GM12878 (cell line): ENCODE measurements at regions of chr6 and their contacts with region 1.

Region 1: DNA sequence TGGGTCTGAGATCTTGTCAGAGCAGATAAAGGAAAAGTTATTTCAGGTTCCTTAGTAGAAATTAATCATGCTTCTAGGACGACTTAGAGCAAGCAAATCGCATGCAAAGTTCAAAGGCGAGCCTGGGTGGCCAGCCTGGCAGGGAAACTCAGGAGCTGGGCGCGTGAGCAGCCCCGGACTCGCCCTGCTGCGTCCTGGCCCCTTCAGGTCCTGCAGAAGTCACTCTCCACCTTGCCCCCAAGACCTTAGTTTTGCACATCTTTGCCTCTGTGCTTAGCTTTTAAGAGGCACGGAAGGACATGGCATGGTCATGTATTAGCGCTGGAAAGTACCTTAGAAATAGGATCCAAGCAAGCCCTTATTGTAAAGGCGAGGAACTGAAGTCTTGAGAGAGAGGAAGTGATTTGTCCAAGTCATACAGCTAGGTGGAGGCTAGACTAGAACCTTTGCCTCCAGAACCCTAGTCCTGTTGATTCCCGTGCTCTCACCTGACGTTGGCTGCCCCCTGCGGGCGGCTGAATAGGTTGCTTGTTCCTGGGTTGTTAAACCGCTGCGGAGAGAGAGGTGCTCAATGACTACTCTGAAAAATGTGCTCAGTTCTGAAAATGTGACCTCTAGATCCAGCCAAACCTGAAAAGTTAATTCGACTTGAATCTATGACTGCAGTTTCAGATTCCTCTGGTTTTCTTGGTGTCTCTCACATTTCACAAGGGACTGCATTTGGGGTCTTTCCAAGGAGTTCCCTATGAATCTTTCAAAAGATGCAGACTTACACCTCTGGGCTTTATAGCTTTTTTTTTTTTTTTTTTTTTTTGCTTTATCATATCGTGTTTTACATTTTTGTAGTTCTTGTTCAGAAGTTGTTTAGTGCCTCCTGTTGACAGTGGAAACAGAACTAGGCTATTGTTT is 2.7 kb downstream of the MYB start:
- DNase-seq: no peak
- ATAC-seq: peak; percentile 62
- H3K4me3 ChIP-seq: peak overlapping the region; percentile 89
- H3K27ac ChIP-seq: peak overlapping the region; percentile 99
- H3K4me1 ChIP-seq: peaks cover 16% of the 10 kb centered on the region
- H3K27me3 ChIP-seq: no peaks in the 10 kb centered on the region
- CTCF ChIP-seq: peak; percentile 71 to 91 (median 79); a peak in 5 of 6 replicates
- EP300 ChIP-seq: no peak; a peak in 1 of 4 replicates
- POLR2A ChIP-seq: peak; percentile 12
- RAD21 ChIP-seq: peak; percentile 90

Region 2: DNA sequence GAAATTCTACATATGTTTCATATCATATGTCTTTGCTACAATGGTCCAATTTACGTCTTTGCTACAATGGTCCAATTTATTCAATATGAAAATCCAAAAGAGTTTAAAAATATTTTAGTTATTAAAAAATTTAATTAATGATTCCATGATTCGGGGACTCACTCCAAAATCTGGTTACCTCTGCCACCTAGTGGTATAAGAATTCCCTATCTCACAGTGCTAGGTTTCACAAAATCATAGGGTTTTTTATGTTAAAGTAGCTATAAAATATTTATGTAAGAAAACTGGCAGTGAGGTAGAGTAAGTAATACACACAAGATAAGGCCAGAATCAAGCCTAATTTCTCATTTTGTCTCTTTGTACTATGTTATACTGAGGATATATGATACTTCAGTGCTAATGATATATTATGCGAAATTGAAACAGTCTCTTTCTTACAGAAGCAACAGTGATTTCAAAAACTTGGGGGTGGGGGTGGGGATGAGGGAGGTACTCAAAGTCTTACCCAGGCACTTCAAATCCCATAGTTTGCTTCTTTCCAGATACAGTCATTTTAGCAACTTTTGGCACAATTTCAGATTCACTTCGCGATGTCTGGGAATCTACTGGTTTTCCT is 181.4 kb before region 1 on chr6:
- CTCF ChIA-PET with region 1: interaction called, 12 read pairs
- POLR2A ChIA-PET with region 1: interaction called, 4 read pairs
- RAD21 ChIA-PET with region 1: interaction called, 14 read pairs
- SMC1A ChIA-PET with region 1: interaction called, 25 read pairs
- in situ Hi-C with region 1: no loop called
- intact Hi-C with region 1: loop called (anchors 2 kb)
- DNase-seq: no peak
- ATAC-seq: peak; percentile 64
- H3K4me3 ChIP-seq: no peak overlapping the region; the same call in 1 of the 2 replicates
- H3K27ac ChIP-seq: peak overlapping the region; percentile 88
- H3K4me1 ChIP-seq: peaks cover 11% of the 10 kb centered on the region
- H3K27me3 ChIP-seq: no peaks in the 10 kb centered on the region
- CTCF ChIP-seq: peak; percentile 42 to 45 (median 44); a peak in 4 of 6 replicates
- EP300 ChIP-seq: no peak
- POLR2A ChIP-seq: no peak
- RAD21 ChIP-seq: peak; percentile 65

Region 3: DNA sequence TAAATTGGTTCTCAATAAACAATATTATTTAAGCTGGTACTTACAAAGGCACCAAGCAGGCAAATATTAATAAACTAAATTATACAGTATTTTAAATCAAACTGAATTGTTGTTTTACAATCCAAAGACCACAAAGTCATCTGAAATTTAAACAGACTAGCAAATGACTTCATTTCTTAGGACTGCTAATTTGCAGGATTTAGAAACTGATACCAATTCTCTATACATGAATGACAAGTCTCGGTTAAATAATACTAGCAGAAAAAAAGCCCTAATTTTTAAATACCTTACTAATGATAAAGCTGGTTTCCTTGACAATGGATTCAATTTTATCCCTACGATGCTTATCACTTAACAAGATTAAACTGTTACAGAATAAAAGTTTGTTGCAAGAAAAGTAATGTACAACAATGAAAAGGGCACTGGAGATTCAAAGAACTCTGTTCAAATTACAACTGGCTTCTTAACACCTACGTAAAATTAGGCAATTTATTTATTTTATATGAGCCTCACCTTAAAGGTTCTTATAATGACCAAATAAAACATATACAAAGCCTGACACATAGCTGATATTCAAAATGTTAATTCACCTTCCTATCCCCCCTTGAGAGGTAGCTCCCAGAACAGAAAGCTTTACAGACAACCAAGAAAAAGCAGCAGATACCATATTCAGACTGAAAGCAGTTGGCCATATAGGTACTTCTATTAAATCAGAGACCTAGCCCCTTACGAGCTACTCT is 162.3 kb before region 1 on chr6:
- CTCF ChIA-PET with region 1: no interaction called
- POLR2A ChIA-PET with region 1: interaction called, 4 read pairs
- RAD21 ChIA-PET with region 1: interaction called, 15 read pairs
- SMC1A ChIA-PET with region 1: interaction called, 7 read pairs
- in situ Hi-C with region 1: no loop called
- intact Hi-C with region 1: no loop called
- DNase-seq: no peak
- ATAC-seq: peak; percentile 91
- H3K4me3 ChIP-seq: 0 out of 2 replicates have a peak overlapping the region, but pooled peaks have one; percentile 13
- H3K27ac ChIP-seq: peak overlapping the region; percentile 54; the same call in 1 of the 2 replicates
- H3K4me1 ChIP-seq: peaks cover 12% of the 10 kb centered on the region; the same call in 1 of the 2 replicates
- H3K27me3 ChIP-seq: no peaks in the 10 kb centered on the region
- CTCF ChIP-seq: no peak
- EP300 ChIP-seq: peak in 1 of 2 experiments; percentile 26; a peak in 1 of 4 replicates
- POLR2A ChIP-seq: no peak
- RAD21 ChIP-seq: no peak

Region 4: GRCh38 chr6:135145063-135145800 is 38.6 kb before region 1 on chr6:
- CTCF ChIA-PET with region 1: interaction called, 149 read pairs
- POLR2A ChIA-PET with region 1: interaction called, 15 read pairs
- RAD21 ChIA-PET with region 1: interaction called, 69 read pairs
- SMC1A ChIA-PET with region 1: interaction called, 133 read pairs
- in situ Hi-C with region 1: no loop called
- intact Hi-C with region 1: loop called (anchors 1 kb)
- DNase-seq: no peak
- ATAC-seq: peak; percentile 75
- H3K4me3 ChIP-seq: 0 out of 2 replicates have a peak overlapping the region, but pooled peaks have one; percentile 18
- H3K27ac ChIP-seq: 0 out of 2 replicates have a peak overlapping the region, but pooled peaks have one; percentile 29
- H3K4me1 ChIP-seq: peaks cover 40% of the 10 kb centered on the region
- H3K27me3 ChIP-seq: no peaks in the 10 kb centered on the region
- CTCF ChIP-seq: peak; percentile 50 to 72 (median 65)
- EP300 ChIP-seq: no peak
- POLR2A ChIP-seq: no peak
- RAD21 ChIP-seq: peak; percentile 93

Region 5: DNA sequence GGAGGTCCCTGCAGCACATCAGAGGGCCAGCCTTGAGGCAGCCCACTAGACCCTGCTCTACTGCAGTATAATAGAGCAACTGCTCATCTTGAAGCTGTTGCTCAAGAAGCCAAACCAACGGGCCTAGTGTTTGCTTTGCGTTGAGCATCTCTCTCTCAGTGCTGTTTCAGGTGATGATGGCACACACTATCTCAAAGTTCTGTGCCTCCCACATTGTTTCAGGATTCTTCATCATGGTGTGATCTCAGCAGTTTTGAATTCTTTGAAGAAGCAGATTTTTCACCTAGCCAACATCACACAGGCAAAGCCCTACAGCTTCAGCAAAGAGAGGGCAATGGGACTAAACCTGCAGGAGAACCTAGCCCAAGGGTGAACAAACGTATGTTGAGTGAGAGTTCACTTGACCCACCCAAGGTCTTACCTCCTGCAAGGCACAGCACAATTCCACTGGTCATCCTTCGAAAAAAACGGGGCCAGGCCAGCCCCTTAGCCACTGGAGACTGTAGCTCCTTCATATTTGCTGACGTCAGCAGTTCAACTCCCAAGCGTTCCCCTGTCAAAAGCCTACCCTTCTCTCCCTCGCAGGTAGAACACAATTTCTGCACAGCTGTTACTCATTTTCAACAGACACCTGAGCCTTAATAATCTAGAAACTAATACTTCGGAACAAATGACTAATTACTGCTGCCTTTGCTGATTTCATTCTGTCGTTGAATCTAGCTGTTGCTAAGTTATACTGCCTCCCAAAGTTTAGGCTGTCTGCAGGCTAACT is 13.1 kb after region 1 on chr6:
- CTCF ChIA-PET with region 1: interaction called, 8 read pairs
- POLR2A ChIA-PET with region 1: no interaction called
- RAD21 ChIA-PET with region 1: interaction called, 5 read pairs
- SMC1A ChIA-PET with region 1: interaction called, 16 read pairs
- in situ Hi-C with region 1: no loop called
- intact Hi-C with region 1: no loop called
- DNase-seq: no peak
- ATAC-seq: peak; percentile 42; the same call in 2 of the 3 replicates
- H3K4me3 ChIP-seq: no peak overlapping the region
- H3K27ac ChIP-seq: no peak overlapping the region
- H3K4me1 ChIP-seq: no peaks in the 10 kb centered on the region
- H3K27me3 ChIP-seq: no peaks in the 10 kb centered on the region
- CTCF ChIP-seq: no peak
- EP300 ChIP-seq: no peak
- POLR2A ChIP-seq: no peak
- RAD21 ChIP-seq: no peak

Region 6: DNA sequence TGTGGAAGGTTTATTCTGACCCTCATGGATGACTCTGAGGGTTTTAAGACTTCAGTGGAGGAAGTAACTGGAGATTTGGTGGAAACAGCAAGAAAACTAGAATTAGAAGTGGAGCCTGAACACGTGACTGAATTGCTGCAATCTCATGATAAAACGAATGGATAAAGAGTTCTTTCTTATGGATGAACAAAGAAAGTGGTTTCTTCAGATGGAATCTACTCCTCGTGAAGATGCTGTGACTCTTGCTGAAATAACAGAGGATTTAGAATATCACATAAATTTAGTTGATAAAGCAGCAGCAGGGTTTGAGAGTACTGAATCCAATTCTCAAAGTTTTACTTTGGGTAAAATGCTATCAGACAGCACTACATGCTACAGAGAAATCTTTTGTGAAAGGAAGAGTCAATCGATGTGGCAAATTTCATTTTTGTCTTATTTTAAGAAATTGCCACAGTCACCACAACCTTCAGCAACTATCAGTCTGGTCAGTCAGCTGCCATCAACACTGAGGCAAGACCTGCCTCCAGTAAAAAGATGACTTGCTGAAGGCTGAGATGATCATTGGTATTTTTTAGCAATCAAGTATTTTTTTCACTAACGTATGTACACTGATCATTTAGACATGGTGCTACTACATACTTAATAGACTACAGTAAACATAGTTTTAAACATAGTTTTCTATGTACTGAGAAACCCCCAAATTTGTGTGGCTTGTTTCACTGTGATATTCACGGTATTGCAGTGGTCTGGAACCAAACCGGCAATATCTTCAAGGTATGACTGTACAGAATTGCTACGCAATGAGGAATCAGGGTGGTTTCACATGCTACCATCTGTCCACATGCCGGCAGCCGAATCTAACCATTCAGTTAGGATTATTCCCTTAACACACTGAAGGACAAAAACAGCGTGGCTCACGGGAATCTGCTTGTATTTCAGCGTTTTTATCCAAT is 146.3 kb after region 1 on chr6:
- CTCF ChIA-PET with region 1: interaction called, 4 read pairs
- POLR2A ChIA-PET with region 1: no interaction called
- RAD21 ChIA-PET with region 1: interaction called, 3 read pairs
- SMC1A ChIA-PET with region 1: interaction called, 3 read pairs
- in situ Hi-C with region 1: no loop called
- intact Hi-C with region 1: loop called (anchors 2 kb)
- DNase-seq: peak; percentile 68
- ATAC-seq: peak; percentile 94
- H3K4me3 ChIP-seq: 0 out of 2 replicates have a peak overlapping the region, but pooled peaks have one; percentile 11
- H3K27ac ChIP-seq: peak overlapping the region; percentile 67
- H3K4me1 ChIP-seq: peaks cover 15% of the 10 kb centered on the region
- H3K27me3 ChIP-seq: no peaks in the 10 kb centered on the region
- CTCF ChIP-seq: peak in 2 of 3 experiments; percentile 2 to 9; a peak in 1 of 6 replicates
- EP300 ChIP-seq: peak; percentile 77 to 85; a peak in 3 of 4 replicates
- POLR2A ChIP-seq: no peak
- RAD21 ChIP-seq: peak; percentile 48